Right lobe of liver (tissue), 6 donors: ENCODE measurements at regions of chr16 and their contacts with region 1.

Region 1: GRCh38 chr16:66266436-66267291 is 99.8 kb upstream of the CDH5 start:
- DNase-seq: peak in 1 of 3 donors; percentile 37
- ATAC-seq: no peak
- H3K4me3 ChIP-seq: no peak overlapping the region
- H3K27ac ChIP-seq: no peak overlapping the region
- H3K4me1 ChIP-seq: peaks cover 0 to 4% (median 0%) of the 10 kb centered on the region in 4 donors
- H3K27me3 ChIP-seq: no peaks in the 10 kb centered on the region
- CTCF ChIP-seq: no peak
- POLR2A ChIP-seq: no peak

Region 2: GRCh38 chr16:66036793-66037715 is 229.6 kb before region 1 on chr16:
- intact Hi-C with region 1: loop called in 1 of 2 experiments (anchors 10 kb)
- DNase-seq: peak in 1 of 3 donors; percentile 17
- ATAC-seq: peak in 1 of 4 donors; percentile 8
- H3K4me3 ChIP-seq: no peak overlapping the region
- H3K27ac ChIP-seq: no peak overlapping the region
- H3K4me1 ChIP-seq: peaks cover 0 to 6% (median 0%) of the 10 kb centered on the region in 4 donors
- H3K27me3 ChIP-seq: no peaks in the 10 kb centered on the region
- CTCF ChIP-seq: no peak
- POLR2A ChIP-seq: no peak

Region 3: DNA sequence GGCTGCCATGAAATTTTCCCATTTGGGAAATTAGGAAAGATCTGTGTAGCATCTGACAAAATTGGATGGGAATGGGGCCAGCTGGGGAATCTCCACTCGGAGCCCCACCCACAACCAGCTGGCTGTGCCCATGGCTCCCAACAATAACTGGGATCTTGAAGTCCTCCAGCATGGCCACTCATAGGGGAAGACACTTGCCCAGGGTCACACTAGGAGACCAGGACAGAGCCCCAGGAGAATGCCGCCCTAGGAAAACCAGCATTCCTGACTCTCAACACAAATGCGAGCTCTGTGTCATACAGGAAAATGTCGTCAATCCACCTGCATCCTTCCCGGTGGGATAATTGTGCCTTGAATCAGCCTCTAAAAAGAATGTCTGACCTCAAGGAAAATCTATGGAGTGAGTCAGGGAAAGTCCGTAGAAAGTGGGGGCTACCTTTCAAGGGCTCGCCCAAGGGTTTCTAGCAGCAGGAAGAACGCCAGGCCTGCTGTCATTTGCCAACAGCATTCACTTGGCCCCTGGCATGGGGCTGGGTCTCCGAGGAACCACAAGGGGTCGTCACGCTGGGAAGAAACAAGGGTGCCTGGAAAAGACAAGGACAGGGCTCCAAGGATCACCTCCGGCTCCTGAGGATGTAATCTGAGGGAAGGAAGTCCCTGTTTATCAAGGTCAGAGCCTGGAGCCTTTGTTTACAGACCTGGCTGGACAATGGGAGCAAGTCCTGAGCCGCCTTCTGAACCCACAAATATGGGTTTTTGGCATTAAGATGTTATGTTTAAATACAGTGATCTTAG is 115.7 kb after region 1 on chr16:
- intact Hi-C with region 1: no loop called
- DNase-seq: peak in 1 of 3 donors; percentile 24
- ATAC-seq: peak; percentile 50 to 72 (median 66)
- H3K4me3 ChIP-seq: no peak overlapping the region
- H3K27ac ChIP-seq: peak overlapping the region in 2 of 3 donors; percentile 13 to 51
- H3K4me1 ChIP-seq: no peaks in the 10 kb centered on the region
- H3K27me3 ChIP-seq: no peaks in the 10 kb centered on the region
- CTCF ChIP-seq: no peak
- POLR2A ChIP-seq: no peak